Activated naive CD8-positive, alpha-beta T cell treated with anti-CD3 and anti-CD28 coated beads, Interleukin-2, amount 10 ng/mL, durations not matched to agents 7 days and 5 days (primary cell): ENCODE measurements at regions of chr1 and their contacts with region 1.

Region 1: GRCh38 chr1:24415334-24415909 is at the start of gene NIPAL3:
- DNase-seq: peak; percentile 92
- ATAC-seq: peak; percentile 96
- H3K4me3 Mint-ChIP-seq: peak within 1 kb of the TSS; percentile 88
- H3K27ac Mint-ChIP-seq: peak within 1 kb of the TSS; percentile 76
- H3K4me1 Mint-ChIP-seq: peaks cover 37% of the 10 kb centered on the region
- H3K27me3 Mint-ChIP-seq: no peaks in the 10 kb centered on the region
- total RNA-seq, gene NIPAL3: 54.1 to 55.1 TPM

Region 2: DNA sequence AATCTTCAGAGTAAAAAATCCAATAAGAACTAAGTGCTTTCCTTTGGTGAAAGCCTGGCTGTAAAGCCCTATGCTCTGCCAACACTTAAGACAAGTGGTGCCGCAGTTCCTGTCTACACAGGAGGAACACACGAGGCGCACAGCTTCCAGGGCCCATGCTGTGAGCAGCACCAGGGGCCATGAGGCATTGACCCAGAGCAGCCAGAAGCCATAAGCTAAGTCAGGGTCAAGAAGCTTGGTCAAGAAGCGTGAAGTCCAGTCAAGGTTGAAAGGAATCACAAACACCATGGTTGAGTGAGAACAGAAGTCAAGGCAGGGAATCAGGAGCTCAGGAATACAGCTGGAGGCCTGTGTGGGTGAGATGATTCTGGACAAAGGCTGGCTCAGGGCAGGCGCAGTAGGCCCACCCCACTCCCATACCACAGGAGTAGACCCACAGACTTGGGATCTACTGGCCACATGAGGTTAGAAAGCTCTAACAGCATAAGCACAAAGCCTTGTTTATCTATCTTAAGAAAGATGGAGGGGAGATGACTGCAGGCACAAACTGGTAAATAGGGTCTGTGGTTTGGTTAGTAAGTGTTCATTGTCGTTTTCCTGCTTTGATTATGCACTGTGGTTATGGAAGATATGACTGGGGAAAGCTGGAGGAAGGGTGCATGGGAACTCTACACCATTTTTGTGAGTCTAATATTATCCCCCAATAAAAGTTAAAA is 44.3 kb after region 1 on chr1:
- POLR2A ChIA-PET with region 1: no interaction called
- DNase-seq: no peak
- ATAC-seq: no peak
- H3K4me3 Mint-ChIP-seq: no peak overlapping the region
- H3K27ac Mint-ChIP-seq: peak overlapping the region; percentile 39
- H3K4me1 Mint-ChIP-seq: peaks cover 4% of the 10 kb centered on the region
- H3K27me3 Mint-ChIP-seq: no peaks in the 10 kb centered on the region

Region 3: DNA sequence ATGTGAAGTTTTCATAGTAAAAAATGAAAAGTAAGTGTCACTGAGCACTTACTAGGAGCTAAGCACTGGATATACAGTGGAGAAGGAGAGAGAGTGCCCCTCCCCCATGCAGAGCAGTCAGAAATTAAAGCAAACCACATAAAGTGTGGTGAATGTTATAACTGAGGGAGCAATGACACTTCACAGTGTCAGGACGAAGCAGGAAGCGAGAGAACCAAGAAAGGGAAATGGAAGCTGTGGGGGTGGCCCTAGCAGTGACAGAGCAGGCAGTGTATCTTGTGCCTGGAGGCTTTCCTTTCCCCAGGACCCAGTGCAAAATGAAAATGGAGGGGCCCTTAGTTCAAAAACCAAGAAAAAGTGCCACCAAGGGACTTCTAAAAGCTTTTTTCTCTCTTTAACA is 65.7 kb after region 1 on chr1:
- POLR2A ChIA-PET with region 1: interaction called, 69 read pairs
- DNase-seq: no peak
- ATAC-seq: peak; percentile 74
- H3K4me3 Mint-ChIP-seq: peak overlapping the region; percentile 79
- H3K27ac Mint-ChIP-seq: peak overlapping the region; percentile 90
- H3K4me1 Mint-ChIP-seq: peaks cover 48% of the 10 kb centered on the region
- H3K27me3 Mint-ChIP-seq: no peaks in the 10 kb centered on the region

Region 4: DNA sequence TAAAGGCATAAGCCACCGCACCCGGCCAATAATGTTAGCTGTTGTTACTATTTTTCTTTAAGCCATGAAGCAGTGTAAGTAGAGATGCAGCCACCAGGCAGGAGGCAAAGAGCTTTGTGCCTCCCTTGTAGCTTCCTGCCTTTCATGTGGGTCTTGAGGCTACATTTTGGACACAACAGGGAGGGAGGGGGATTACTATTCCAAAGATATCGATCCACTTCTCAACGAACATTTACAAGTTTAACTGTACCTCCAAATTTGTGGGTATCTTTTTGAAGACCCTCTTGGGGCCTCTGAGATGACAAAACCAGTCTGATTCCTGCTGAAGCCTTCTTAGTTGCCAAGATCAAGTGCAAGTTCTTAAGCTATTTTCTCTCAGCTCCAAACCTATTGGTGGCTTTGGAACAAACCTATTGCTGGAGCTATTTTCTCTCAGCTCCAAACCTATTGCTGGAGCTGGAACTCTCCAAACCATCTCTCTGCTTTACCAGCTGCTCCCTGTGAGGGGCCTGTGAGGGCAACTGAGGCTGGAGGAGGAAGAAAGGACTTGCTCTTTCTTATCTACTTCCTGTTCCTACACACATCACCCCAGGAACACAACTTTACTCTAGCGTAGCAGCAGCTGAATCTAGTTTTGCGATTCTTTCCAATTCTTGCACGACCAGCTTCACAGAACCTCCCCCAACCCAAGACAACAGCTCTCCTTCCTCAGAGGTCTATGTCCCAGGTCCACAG is 71.1 kb after region 1 on chr1:
- POLR2A ChIA-PET with region 1: interaction called, 69 read pairs
- DNase-seq: peak; percentile 55
- ATAC-seq: peak; percentile 37
- H3K4me3 Mint-ChIP-seq: peak overlapping the region; percentile 68
- H3K27ac Mint-ChIP-seq: peak overlapping the region; percentile 96
- H3K4me1 Mint-ChIP-seq: peaks cover 58% of the 10 kb centered on the region
- H3K27me3 Mint-ChIP-seq: no peaks in the 10 kb centered on the region

Region 5: DNA sequence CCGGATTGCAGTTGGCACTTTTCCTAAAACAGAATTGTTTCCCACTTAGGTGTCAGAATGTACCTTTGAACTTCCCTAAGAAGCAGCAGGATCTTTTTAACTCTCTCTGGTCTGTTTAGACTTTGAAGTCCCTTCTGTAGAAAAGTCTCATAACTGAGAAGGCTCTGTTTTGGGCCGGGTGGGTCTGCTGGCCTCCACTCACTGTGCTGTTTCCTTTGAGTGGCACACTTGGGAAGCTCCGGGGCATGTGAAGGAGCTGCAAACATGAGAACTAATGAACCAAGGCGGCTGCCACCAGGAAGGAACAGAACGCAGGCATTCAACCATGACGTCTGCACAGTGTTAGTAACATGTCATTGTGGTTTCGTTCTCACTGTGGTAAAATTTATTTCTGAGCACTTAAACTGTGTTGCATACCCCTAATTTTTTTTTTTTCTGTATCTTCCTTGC is 121.0 kb after region 1 on chr1:
- POLR2A ChIA-PET with region 1: interaction called, 11 read pairs
- DNase-seq: peak; percentile 55
- ATAC-seq: peak; percentile 61
- H3K4me3 Mint-ChIP-seq: peak overlapping the region; percentile 88
- H3K27ac Mint-ChIP-seq: peak overlapping the region; percentile 97
- H3K4me1 Mint-ChIP-seq: peaks cover 47% of the 10 kb centered on the region
- H3K27me3 Mint-ChIP-seq: no peaks in the 10 kb centered on the region

Region 6: GRCh38 chr1:24793447-24794131 is 378.2 kb after region 1 on chr1:
- POLR2A ChIA-PET with region 1: no interaction called
- DNase-seq: no peak
- ATAC-seq: no peak
- H3K4me3 Mint-ChIP-seq: no peak overlapping the region
- H3K27ac Mint-ChIP-seq: no peak overlapping the region
- H3K4me1 Mint-ChIP-seq: no peaks in the 10 kb centered on the region
- H3K27me3 Mint-ChIP-seq: peaks cover 10% of the 10 kb centered on the region